HCT116 (cell line): ENCODE measurements at regions of chr3 and their contacts with region 1.

Region 1: DNA sequence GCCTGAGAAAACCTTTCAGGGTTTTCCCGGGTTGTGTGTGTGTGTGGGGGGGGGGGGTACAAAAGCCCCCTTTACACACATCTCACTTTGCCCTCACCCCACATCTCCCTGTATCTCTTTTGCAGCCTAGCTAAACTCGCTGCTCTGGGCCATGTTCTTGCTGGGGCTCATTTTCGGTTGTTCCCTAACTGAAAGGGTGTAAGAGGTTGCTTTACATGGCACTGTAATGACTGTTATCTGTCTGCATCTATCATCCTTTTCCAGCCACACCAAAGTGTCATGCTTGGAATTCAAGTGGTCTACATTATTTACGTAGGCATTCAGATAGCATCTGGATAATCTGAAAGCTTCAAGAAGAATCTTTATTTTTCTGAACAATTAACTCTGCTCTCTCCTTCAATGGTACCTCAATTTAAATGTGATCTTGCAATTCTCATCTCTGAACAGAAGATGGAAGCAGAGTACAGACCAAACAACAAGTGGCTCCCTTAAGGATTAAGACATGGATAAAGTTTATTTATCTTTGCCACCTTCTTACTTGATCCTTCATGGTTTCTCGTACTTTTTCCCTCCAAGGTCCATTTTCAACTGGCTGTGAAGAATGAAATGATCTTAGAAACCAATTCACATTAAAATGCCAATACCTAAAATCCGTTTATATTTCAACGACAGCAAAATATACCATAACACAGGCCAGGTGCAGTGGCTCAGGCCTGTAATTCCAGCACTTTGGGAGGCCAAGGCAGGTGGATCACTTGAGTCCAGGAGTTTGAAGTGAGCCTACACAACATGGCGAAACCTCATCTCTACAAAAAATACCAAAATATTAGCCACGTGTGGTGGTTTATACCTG is 34.9 kb downstream of the DCLK3 start:
- DNase-seq: peak; percentile 39
- ATAC-seq: peak; percentile 83
- H3K4me3 ChIP-seq: no peak overlapping the region
- H3K27ac ChIP-seq: no peak overlapping the region
- H3K4me1 ChIP-seq: no peaks in the 10 kb centered on the region; a peak in 1 of 4 replicates
- H3K27me3 ChIP-seq: peaks cover 9% of the 10 kb centered on the region; the same call in 1 of the 2 replicates
- CTCF ChIP-seq: peak; percentile 55 to 76 (median 73)
- POLR2A ChIP-seq: no peak
- RAD21 ChIP-seq: peak; percentile 89

Region 2: GRCh38 chr3:36525115-36525801 is 204.2 kb before region 1 on chr3:
- CTCF ChIA-PET with region 1: no interaction called
- POLR2A ChIA-PET with region 1: no interaction called
- RAD21 ChIA-PET with region 1: no interaction called
- intact Hi-C with region 1: no loop called
- DNase-seq: no peak
- ATAC-seq: no peak
- H3K4me3 ChIP-seq: no peak overlapping the region
- H3K27ac ChIP-seq: no peak overlapping the region
- H3K4me1 ChIP-seq: peaks cover 0 to 4% of the 10 kb centered on the region in 2 experiments; a peak in 1 of 4 replicates
- H3K27me3 ChIP-seq: no peaks in the 10 kb centered on the region
- CTCF ChIP-seq: no peak
- POLR2A ChIP-seq: no peak
- RAD21 ChIP-seq: no peak

Region 3: DNA sequence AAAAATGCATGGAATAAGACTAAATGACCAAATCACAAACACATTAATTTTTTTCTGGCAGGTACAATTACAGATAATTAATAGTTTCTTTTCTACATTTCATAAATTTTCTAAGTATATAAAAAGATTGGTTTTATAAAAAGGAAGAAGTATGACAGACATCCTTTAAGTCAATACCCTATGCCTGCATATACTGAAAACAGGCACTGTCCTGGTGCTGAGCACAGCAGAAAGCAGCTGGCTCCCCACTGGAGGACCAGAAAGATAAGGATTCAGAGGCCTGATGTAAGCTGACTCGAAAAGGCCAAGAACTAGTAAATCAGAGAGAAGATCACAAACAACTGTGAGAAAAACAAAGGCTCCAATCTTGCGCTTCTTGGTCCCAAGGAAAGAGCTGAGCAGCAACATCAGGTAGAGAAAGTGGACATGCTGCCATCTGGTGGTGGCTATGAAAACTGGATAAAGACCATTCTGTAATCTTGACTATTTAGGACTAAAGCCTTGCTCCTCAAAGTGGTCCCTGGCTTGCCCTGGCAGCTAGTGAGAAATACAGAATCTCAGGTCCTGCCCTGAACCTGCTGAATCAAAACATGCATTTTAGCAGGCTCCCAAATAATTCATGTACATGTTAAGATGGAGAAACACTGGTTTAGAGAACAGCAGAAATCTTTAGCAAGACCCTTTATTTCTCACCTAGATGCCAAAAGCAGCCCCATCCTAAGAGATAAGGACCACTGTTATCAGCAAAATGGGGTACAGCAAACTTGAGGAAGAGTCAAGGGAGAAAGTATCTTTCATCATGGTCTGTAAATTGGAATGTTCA is 139.4 kb after region 1 on chr3:
- CTCF ChIA-PET with region 1: interaction called, 8 read pairs
- POLR2A ChIA-PET with region 1: no interaction called
- RAD21 ChIA-PET with region 1: no interaction called
- intact Hi-C with region 1: loop called (anchors 1 kb)
- DNase-seq: peak; percentile 48
- ATAC-seq: peak; percentile 96
- H3K4me3 ChIP-seq: no peak overlapping the region
- H3K27ac ChIP-seq: no peak overlapping the region
- H3K4me1 ChIP-seq: no peaks in the 10 kb centered on the region
- H3K27me3 ChIP-seq: peaks cover 28% of the 10 kb centered on the region
- CTCF ChIP-seq: peak; percentile 60 to 84 (median 68)
- POLR2A ChIP-seq: no peak
- RAD21 ChIP-seq: peak; percentile 76

Region 4: DNA sequence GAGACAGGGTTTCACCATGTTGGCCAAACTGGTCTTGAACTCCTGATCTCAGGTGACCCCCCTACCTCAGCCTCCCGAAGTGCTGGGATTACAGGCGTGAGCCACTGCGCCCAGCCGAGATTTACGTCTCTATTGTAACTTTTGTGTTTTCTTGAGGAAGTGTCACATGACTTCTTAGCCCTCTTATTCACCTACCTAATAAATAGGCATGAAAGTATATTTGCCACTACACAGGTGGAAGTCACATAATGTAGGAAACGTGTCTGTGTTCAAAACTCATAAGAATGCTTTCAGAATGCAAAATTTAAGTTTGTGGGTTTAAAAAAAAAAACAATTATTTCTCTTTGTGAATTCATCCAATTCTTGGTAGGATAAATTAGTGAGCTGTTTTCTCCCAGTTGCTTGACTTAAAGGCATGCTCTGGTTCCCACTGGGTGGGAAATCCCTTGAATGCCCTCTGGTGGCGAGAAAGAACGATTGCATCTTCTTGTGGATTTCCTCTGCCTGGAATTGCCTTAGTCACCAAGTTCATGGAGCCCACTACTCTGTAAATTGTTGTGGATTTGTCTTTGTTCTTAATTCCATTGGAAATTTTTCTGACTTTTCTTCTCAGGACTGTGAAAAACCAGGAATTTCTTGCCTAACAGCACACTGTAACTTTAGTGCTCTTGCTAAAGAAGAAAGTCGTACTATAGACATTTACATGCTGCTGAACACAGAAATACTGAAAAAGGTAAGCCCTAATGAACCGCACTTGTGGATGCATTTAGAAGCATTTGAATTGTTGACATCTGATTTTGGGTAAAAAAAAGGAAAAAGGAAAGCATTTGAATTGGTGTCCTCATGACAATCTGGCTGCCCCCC is 1050.1 kb after region 1 on chr3:
- CTCF ChIA-PET with region 1: no interaction called
- POLR2A ChIA-PET with region 1: no interaction called
- RAD21 ChIA-PET with region 1: no interaction called
- intact Hi-C with region 1: loop called (anchors 5 kb)
- DNase-seq: peak; percentile 69
- ATAC-seq: peak; percentile 90
- H3K4me3 ChIP-seq: no peak overlapping the region
- H3K27ac ChIP-seq: no peak overlapping the region
- H3K4me1 ChIP-seq: no peaks in the 10 kb centered on the region
- H3K27me3 ChIP-seq: peaks cover 5% of the 10 kb centered on the region; the same call in 1 of the 2 replicates
- CTCF ChIP-seq: peak; percentile 63 to 86 (median 83); a peak in 5 of 6 replicates
- POLR2A ChIP-seq: no peak
- RAD21 ChIP-seq: peak; percentile 76